K562 (cell line): ENCODE measurements at regions of chr6 and their contacts with region 1.

Region 1: DNA sequence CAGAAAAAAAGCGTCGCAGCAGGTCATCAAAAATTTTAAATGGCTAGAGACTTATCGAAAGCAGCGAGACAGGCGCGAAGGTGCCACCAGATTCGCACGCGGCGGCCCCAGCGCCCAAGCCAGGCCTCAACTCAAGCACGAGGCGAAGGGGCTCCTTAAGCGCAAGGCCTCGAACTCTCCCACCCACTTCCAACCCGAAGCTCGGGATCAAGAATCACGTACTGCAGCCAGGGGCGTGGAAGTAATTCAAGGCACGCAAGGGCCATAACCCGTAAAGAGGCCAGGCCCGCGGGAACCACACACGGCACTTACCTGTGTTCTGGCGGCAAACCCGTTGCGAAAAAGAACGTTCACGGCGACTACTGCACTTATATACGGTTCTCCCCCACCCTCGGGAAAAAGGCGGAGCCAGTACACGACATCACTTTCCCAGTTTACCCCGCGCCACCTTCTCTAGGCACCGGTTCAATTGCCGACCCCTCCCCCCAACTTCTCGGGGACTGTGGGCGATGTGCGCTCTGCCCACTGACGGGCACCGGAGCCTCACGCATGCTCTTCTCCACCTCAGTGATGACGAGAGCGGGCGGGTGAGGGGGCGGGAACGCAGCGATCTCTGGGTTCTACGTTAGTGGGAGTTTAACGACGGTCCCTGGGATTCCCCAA is at the start of gene EEF1A1:
- DNase-seq: peak; percentile 78 to 99 (median 86)
- ATAC-seq: peak; percentile 75
- H3K4me3 ChIP-seq: peak within 1 kb of the TSS; percentile 80
- H3K27ac ChIP-seq: peak within 1 kb of the TSS; percentile 96
- H3K4me1 ChIP-seq: peaks cover 2 to 6% of the 10 kb centered on the region in 2 experiments; a peak in 3 of 5 replicates
- H3K27me3 ChIP-seq: no peaks in the 10 kb centered on the region
- CTCF ChIP-seq: no peak
- EP300 ChIP-seq: peak; percentile 9
- POLR2A ChIP-seq: peak; percentile 100
- RAD21 ChIP-seq: peak; percentile 7 to 16; a peak in 1 of 4 replicates
- polyA plus RNA-seq, gene EEF1A1: 6,453 to 7,909 TPM

Region 2: DNA sequence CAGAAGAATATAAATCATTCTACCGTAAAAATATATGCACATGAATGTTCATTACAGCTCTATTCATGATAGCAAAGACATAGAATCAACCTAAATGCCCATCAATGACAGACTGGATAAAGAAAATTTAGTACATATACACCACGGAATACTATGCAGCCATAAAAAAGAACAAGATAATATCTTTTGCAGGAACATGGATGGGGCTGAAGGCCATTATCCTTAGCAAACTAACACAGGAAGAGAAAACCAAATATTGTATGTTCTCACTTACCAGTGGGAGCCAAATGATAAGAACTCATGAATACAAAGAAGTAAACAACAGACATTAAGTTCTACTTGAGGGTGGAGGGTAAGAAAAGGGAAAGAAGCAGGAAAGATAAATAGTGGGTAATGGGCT is 304.0 kb before region 1 on chr6:
- CTCF ChIA-PET with region 1: no interaction called
- POLR2A ChIA-PET with region 1: no interaction called
- in situ Hi-C with region 1: no loop called
- intact Hi-C with region 1: no loop called
- DNase-seq: no peak
- ATAC-seq: no peak
- H3K4me3 ChIP-seq: no peak overlapping the region
- H3K27ac ChIP-seq: no peak overlapping the region
- H3K4me1 ChIP-seq: no peaks in the 10 kb centered on the region
- H3K27me3 ChIP-seq: peaks cover 0 to 7% of the 10 kb centered on the region in 2 experiments; a peak in 2 of 5 replicates
- CTCF ChIP-seq: no peak
- EP300 ChIP-seq: no peak
- POLR2A ChIP-seq: no peak
- RAD21 ChIP-seq: no peak

Region 3: GRCh38 chr6:73537677-73538076 is 16.9 kb after region 1 on chr6:
- CTCF ChIA-PET with region 1: no interaction called
- POLR2A ChIA-PET with region 1: interaction called, 52 read pairs
- in situ Hi-C with region 1: no loop called
- intact Hi-C with region 1: no loop called
- DNase-seq: no peak
- ATAC-seq: no peak
- H3K4me3 ChIP-seq: no peak overlapping the region
- H3K27ac ChIP-seq: no peak overlapping the region
- H3K4me1 ChIP-seq: no peaks in the 10 kb centered on the region
- H3K27me3 ChIP-seq: no peaks in the 10 kb centered on the region
- CTCF ChIP-seq: no peak
- EP300 ChIP-seq: no peak
- POLR2A ChIP-seq: no peak
- RAD21 ChIP-seq: no peak

Region 4: DNA sequence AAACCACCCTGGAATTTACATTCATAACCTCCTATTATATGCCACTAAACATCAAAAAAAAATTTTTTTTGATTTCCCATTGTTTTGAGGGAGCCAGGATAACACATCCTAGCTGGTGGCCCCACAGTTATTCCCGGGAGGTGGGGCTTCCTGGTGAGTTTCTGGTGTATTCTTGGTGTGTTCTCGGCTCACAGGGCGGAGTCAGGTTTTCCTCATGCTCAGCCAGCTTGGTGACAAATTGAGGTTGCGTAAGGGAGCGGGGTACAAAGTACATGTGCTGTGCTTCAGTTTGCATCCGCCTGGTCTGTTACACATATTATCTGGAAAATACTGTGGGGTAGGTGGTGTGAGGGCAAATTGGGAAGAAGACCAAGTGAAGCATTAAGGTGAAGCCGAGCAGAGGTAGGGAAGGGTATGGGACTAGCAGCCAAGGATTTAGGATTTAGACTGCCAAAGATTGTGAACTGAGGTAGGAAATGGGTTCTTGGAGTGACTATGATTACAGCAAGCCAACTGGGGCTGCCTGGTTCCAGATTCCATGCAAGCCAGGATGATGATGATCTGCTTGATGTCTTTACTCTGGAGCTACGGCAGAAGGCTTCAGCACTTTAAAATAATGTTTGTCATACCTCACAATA is 46.3 kb after region 1 on chr6:
- CTCF ChIA-PET with region 1: interaction called, 3 read pairs
- POLR2A ChIA-PET with region 1: interaction called, 24 read pairs
- in situ Hi-C with region 1: no loop called
- intact Hi-C with region 1: loop called (anchors 1 kb)
- DNase-seq: peak in 3 of 4 experiments; percentile 26 to 39 (median 31)
- ATAC-seq: peak; percentile 19
- H3K4me3 ChIP-seq: no peak overlapping the region
- H3K27ac ChIP-seq: no peak overlapping the region
- H3K4me1 ChIP-seq: peaks cover 4 to 19% of the 10 kb centered on the region in 2 experiments; a peak in 4 of 5 replicates
- H3K27me3 ChIP-seq: no peaks in the 10 kb centered on the region
- CTCF ChIP-seq: no peak
- EP300 ChIP-seq: no peak
- POLR2A ChIP-seq: no peak
- RAD21 ChIP-seq: no peak

Region 5: DNA sequence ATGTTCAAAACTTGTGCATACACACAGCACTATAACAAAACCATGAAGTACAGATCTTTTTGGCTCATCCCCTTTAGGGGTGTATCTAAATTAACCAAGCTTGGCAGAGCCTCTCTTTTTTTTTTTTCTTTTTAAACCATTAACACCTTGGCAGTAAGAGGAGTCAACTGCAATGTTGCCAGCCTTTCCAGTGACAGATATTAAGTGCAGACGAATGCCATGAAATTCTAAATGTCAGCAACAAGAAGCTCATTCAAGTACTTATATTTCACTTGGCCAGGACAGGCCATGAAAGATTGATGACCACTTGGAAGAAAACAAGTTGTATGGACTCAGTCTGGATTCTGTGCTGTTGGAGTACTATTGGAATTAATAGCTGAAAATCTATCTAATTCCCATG is 83.2 kb after region 1 on chr6:
- CTCF ChIA-PET with region 1: interaction called, 4 read pairs
- POLR2A ChIA-PET with region 1: interaction called, 32 read pairs
- in situ Hi-C with region 1: no loop called
- intact Hi-C with region 1: no loop called
- DNase-seq: no peak
- ATAC-seq: no peak
- H3K4me3 ChIP-seq: no peak overlapping the region
- H3K27ac ChIP-seq: no peak overlapping the region
- H3K4me1 ChIP-seq: no peaks in the 10 kb centered on the region; a peak in 1 of 5 replicates
- H3K27me3 ChIP-seq: no peaks in the 10 kb centered on the region
- CTCF ChIP-seq: no peak
- EP300 ChIP-seq: no peak
- POLR2A ChIP-seq: no peak
- RAD21 ChIP-seq: no peak

Region 6: GRCh38 chr6:73653571-73654424 is 133.0 kb after region 1 on chr6 and contains the start of gene SLC17A5:
- CTCF ChIA-PET with region 1: interaction called, 21 read pairs
- POLR2A ChIA-PET with region 1: interaction called, 91 read pairs
- in situ Hi-C with region 1: no loop called
- intact Hi-C with region 1: no loop called
- DNase-seq: peak; percentile 92 to 96 (median 94)
- ATAC-seq: peak; percentile 96
- H3K4me3 ChIP-seq: peak within 1 kb of the TSS; percentile 90
- H3K27ac ChIP-seq: peak within 1 kb of the TSS; percentile 90
- H3K4me1 ChIP-seq: peaks cover 5 to 10% of the 10 kb centered on the region in 2 experiments; a peak in 3 of 5 replicates
- H3K27me3 ChIP-seq: no peaks in the 10 kb centered on the region
- CTCF ChIP-seq: no peak
- EP300 ChIP-seq: no peak; the same call in 1 of the 2 replicates
- POLR2A ChIP-seq: peak; percentile 87
- RAD21 ChIP-seq: no peak
- polyA plus RNA-seq, gene SLC17A5: 1.3 to 1.8 TPM